ENCODE measurements at regions of chr2 and their contacts with region 1.

Region 1: GRCh38 chr2:70789304-70790135 is 923 bp downstream of the FIGLA start:
- DNase-seq: peak; percentile 82
- H3K4me3 Mint-ChIP-seq: peak overlapping the region; percentile 49
- H3K27ac Mint-ChIP-seq: no peak overlapping the region
- H3K4me1 Mint-ChIP-seq: peaks cover 11% of the 10 kb centered on the region
- H3K27me3 Mint-ChIP-seq: peaks cover 52% of the 10 kb centered on the region

Region 2: GRCh38 chr2:69734035-69734631 is 1055.4 kb before region 1 on chr2:
- CTCF ChIA-PET with region 1: no interaction called
- POLR2A ChIA-PET with region 1: no interaction called
- intact Hi-C with region 1: no loop called
- DNase-seq: no peak
- H3K4me3 Mint-ChIP-seq: no peak overlapping the region
- H3K27ac Mint-ChIP-seq: no peak overlapping the region
- H3K4me1 Mint-ChIP-seq: no peaks in the 10 kb centered on the region
- H3K27me3 Mint-ChIP-seq: no peaks in the 10 kb centered on the region

Region 3: DNA sequence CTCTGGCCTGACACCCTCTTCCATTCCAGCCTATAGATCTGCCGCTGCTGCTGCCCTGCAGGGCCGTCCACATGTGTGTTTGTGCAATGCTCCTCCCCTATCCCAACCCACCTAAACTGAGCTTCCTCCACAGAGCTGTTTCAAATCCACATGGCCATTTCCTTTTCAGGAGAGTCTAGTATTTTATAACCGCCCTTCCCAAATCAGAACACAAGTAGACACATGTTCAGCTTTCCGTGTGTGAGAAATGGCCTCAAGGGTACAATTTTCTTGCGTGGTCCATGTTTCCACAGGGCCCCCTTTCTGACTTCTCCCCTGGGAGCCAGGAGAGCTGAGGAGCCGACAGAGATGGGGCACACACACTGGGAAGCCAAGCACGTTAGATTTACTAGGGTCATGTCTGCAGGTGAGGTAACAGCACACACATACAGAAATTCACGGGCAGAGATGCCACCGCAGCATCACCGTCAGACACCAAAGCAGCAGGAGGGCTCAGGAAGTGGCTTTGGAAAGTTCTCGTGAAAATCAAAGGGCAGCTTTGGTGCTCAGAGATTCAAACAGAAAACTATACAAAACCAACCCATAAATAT is 133.0 kb before region 1 on chr2:
- CTCF ChIA-PET with region 1: interaction called, 7 read pairs
- POLR2A ChIA-PET with region 1: no interaction called
- intact Hi-C with region 1: loop called (anchors 1 kb)
- DNase-seq: peak; percentile 50
- H3K4me3 Mint-ChIP-seq: no peak overlapping the region
- H3K27ac Mint-ChIP-seq: no peak overlapping the region
- H3K4me1 Mint-ChIP-seq: peaks cover 18% of the 10 kb centered on the region
- H3K27me3 Mint-ChIP-seq: peaks cover 20% of the 10 kb centered on the region

Region 4: DNA sequence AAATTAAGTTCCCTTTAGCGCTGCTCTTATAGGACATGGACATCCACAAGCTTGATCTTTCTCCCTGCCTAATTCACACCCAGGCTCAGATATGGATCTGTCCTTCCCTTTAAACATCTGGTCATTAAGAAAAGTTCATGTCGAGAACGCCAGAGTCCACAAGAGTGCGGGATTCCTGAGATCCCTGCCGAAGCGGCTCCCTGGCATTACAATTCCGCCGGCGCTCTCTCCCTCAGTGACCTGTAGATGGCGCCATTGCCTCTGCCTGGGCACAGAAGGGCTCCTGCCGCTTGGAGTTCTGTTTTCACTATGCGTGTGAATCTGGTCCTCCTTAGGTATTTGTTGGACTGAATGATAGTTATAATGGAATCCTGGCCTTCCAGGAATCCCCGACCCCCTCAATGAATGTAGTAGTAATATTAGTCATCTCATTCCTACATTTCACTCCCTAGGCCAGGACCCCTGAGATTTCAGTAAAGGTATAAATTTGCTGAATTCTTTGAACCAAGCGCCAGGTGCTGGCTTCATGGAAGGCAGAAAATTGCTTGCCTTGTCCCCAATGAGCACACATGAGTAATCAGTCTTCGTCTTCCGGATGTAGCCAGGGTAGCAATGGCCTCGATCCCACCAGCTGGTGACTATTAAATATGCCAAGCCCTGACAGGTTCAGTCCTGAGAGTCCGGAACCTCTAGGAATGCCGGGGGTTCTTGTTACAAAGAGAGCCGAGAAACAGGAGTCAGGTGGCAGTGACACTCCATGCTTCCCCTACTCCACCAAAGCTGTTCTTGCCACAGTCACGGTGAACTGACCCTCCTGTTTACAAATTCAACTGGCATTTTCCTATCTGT is 72.5 kb after region 1 on chr2:
- CTCF ChIA-PET with region 1: interaction called, 8 read pairs
- POLR2A ChIA-PET with region 1: no interaction called
- intact Hi-C with region 1: loop called (anchors 2 kb)
- DNase-seq: peak; percentile 80
- H3K4me3 Mint-ChIP-seq: no peak overlapping the region
- H3K27ac Mint-ChIP-seq: no peak overlapping the region
- H3K4me1 Mint-ChIP-seq: no peaks in the 10 kb centered on the region
- H3K27me3 Mint-ChIP-seq: peaks cover 26% of the 10 kb centered on the region

Region 5: GRCh38 chr2:70919672-70920366 is 130.3 kb after region 1 on chr2:
- CTCF ChIA-PET with region 1: interaction called, 29 read pairs
- POLR2A ChIA-PET with region 1: no interaction called
- intact Hi-C with region 1: loop called (anchors 1 kb)
- DNase-seq: peak; percentile 83
- H3K4me3 Mint-ChIP-seq: no peak overlapping the region
- H3K27ac Mint-ChIP-seq: no peak overlapping the region
- H3K4me1 Mint-ChIP-seq: no peaks in the 10 kb centered on the region
- H3K27me3 Mint-ChIP-seq: peaks cover 14% of the 10 kb centered on the region

Measured in activated CD4-positive, alpha-beta memory T cell treated with anti-CD3 and anti-CD28 coated beads for 36 hours (primary cell).